HepG2 (cell line): ENCODE measurements at regions of chr6 and their contacts with region 1.

Region 1: GRCh38 chr6:19210849-19211590 is 626.1 kb upstream of the ID4 start:
- DNase-seq: peak; percentile 20
- ATAC-seq: peak; percentile 73
- H3K4me3 ChIP-seq: no peak overlapping the region
- H3K27ac ChIP-seq: no peak overlapping the region
- H3K4me1 ChIP-seq: no peaks in the 10 kb centered on the region
- H3K27me3 ChIP-seq: no peaks in the 10 kb centered on the region
- CTCF ChIP-seq: peak; percentile 36
- EP300 ChIP-seq: no peak
- POLR2A ChIP-seq: no peak
- RAD21 ChIP-seq: no peak

Region 2: DNA sequence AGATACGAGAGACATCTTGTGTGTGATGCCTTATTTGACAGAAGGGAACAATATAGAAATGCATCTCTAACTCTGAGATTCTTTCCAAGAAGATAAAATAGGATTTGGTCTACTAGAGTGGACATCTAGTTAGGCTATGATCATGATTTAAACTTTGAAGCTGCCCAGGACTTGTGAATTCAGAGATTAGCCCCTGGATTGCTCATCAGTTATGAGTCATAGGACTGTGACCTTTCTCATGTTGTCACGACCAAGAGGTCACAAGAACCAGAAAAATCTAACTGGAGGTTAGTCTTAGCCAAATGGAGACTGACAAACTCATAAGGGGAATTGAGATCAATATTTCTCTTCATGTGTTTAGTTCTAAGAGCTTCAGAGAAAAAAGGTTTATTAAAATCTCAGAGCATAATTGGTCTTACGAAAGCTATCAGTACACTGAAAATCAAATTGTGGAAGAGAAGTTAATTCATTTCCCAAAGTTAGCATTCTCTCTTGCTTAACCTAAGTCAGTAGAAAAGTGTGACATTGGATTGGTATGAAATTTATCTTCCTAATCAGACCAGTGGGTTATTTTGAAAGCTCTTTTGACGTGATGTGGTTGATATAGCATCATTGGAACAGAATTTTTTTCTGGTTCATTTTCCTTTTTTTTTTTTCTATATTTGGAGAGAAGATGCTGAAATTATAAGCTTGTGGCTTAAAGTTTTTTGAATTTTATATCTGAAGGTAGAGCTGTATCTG is 578.2 kb before region 1 on chr6:
- CTCF ChIA-PET with region 1: no interaction called
- POLR2A ChIA-PET with region 1: no interaction called
- in situ Hi-C with region 1: no loop called
- intact Hi-C with region 1: no loop called
- DNase-seq: peak; percentile 32
- ATAC-seq: no peak; the same call in 2 of the 3 replicates
- H3K4me3 ChIP-seq: no peak overlapping the region
- H3K27ac ChIP-seq: no peak overlapping the region
- H3K4me1 ChIP-seq: no peaks in the 10 kb centered on the region
- H3K27me3 ChIP-seq: no peaks in the 10 kb centered on the region
- CTCF ChIP-seq: no peak
- EP300 ChIP-seq: no peak
- POLR2A ChIP-seq: no peak
- RAD21 ChIP-seq: no peak

Region 3: GRCh38 chr6:19024737-19025136 is 186.3 kb before region 1 on chr6:
- CTCF ChIA-PET with region 1: no interaction called
- POLR2A ChIA-PET with region 1: no interaction called
- in situ Hi-C with region 1: no loop called
- intact Hi-C with region 1: loop called (anchors 10 kb)
- DNase-seq: peak; percentile 30
- ATAC-seq: peak; percentile 78
- H3K4me3 ChIP-seq: no peak overlapping the region
- H3K27ac ChIP-seq: no peak overlapping the region
- H3K4me1 ChIP-seq: no peaks in the 10 kb centered on the region
- H3K27me3 ChIP-seq: no peaks in the 10 kb centered on the region
- CTCF ChIP-seq: peak; percentile 59
- EP300 ChIP-seq: no peak
- POLR2A ChIP-seq: no peak
- RAD21 ChIP-seq: no peak